ENCODE measurements at regions of chr12 and their contacts with region 1.

Region 1: GRCh38 chr12:49366652-49367380 is 446 bp upstream of the SPATS2 start:
- DNase-seq: peak; percentile 92
- ATAC-seq: peak; percentile 86
- H3K4me3 Mint-ChIP-seq: peak overlapping the region; percentile 74
- H3K27ac Mint-ChIP-seq: peak overlapping the region; percentile 98
- H3K4me1 Mint-ChIP-seq: peaks cover 29% of the 10 kb centered on the region
- H3K27me3 Mint-ChIP-seq: no peaks in the 10 kb centered on the region
- CTCF ChIP-seq: no peak

Region 2: GRCh38 chr12:49342066-49342913 is 24.5 kb before region 1 on chr12:
- CTCF ChIA-PET with region 1: interaction called, 71 read pairs
- POLR2A ChIA-PET with region 1: interaction called, 13 read pairs
- intact Hi-C with region 1: no loop called
- DNase-seq: peak; percentile 93
- ATAC-seq: peak; percentile 84
- H3K4me3 Mint-ChIP-seq: peak overlapping the region; percentile 53
- H3K27ac Mint-ChIP-seq: no peak overlapping the region
- H3K4me1 Mint-ChIP-seq: peaks cover 40% of the 10 kb centered on the region
- H3K27me3 Mint-ChIP-seq: peaks cover 69% of the 10 kb centered on the region
- CTCF ChIP-seq: peak; percentile 99

Region 3: GRCh38 chr12:49515266-49515665 is 148.4 kb after region 1 on chr12:
- CTCF ChIA-PET with region 1: interaction called, 366 read pairs
- POLR2A ChIA-PET with region 1: interaction called, 7 read pairs
- intact Hi-C with region 1: no loop called
- DNase-seq: no peak
- ATAC-seq: no peak
- H3K4me3 Mint-ChIP-seq: no peak overlapping the region
- H3K27ac Mint-ChIP-seq: no peak overlapping the region
- H3K4me1 Mint-ChIP-seq: peaks cover 10% of the 10 kb centered on the region
- H3K27me3 Mint-ChIP-seq: no peaks in the 10 kb centered on the region
- CTCF ChIP-seq: no peak

Region 4: GRCh38 chr12:49553512-49554088 is 186.8 kb after region 1 on chr12:
- CTCF ChIA-PET with region 1: interaction called, 4 read pairs
- POLR2A ChIA-PET with region 1: interaction called, 14 read pairs
- intact Hi-C with region 1: no loop called
- DNase-seq: peak; percentile 26
- ATAC-seq: peak; percentile 64
- H3K4me3 Mint-ChIP-seq: no peak overlapping the region
- H3K27ac Mint-ChIP-seq: no peak overlapping the region
- H3K4me1 Mint-ChIP-seq: peaks cover 3% of the 10 kb centered on the region
- H3K27me3 Mint-ChIP-seq: no peaks in the 10 kb centered on the region
- CTCF ChIP-seq: peak; percentile 73

Region 5: DNA sequence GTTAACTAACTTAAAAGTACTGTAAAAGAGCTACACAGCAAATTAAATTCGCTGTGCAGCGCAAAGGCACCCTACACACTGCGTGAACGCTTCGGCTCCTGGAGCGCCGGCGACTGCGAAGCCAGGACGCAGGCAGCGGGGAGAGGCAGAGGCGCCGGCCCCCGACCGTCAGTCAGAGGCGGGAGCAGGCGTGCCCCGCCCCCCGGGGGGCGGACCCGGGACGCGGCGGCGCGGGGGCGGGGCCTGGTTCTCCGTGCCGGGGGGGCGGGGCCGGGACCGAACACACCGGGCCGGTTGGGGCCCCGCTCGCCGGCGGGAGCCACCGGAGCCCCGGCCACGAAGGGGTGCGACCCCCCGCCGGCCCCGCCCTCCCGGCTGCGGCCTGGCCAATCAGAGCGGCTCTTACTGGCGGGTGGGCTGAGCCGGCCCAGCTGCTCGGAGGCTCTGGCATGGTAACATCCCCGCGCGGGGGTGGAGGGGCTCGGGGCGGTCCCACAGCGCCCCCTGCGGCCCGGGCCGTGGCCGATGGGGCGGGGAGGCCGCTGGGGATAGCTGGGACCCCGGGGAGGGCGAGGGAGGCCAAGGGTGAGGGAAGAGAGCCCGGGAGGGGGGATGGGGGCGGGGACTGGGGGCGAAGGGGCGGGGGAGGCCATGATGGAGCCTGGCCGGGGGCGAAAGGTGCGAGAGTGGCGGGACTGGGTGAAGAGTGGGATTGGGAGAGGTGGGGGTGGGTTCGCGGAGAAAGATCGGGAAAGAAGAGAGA is 256.5 kb after region 1 on chr12 and contains the start of gene PRPF40B:
- CTCF ChIA-PET with region 1: interaction called, 6 read pairs
- POLR2A ChIA-PET with region 1: interaction called, 12 read pairs
- intact Hi-C with region 1: no loop called
- DNase-seq: peak; percentile 93
- ATAC-seq: peak; percentile 82
- H3K4me3 Mint-ChIP-seq: peak within 1 kb of the TSS; percentile 76
- H3K27ac Mint-ChIP-seq: peak within 1 kb of the TSS; percentile 79
- H3K4me1 Mint-ChIP-seq: peaks cover 26% of the 10 kb centered on the region
- H3K27me3 Mint-ChIP-seq: peaks cover 22% of the 10 kb centered on the region
- CTCF ChIP-seq: peak; percentile 55
- total RNA-seq, gene PRPF40B: 4.9 to 5.6 TPM

Measured in activated CD8-positive, alpha-beta T cell treated with anti-CD3 and anti-CD28 coated beads for 36 hours (primary cell).